T-cell (primary cell): ENCODE measurements at regions of chr20 and their contacts with region 1.

Region 1: GRCh38 chr20:36951198-36951976 is at the start of gene SAMHD1:
- DNase-seq: peak; percentile 60 to 87 (median 76)
- ATAC-seq: peak; percentile 75 to 82 (median 82)
- H3K4me3 ChIP-seq: peak within 1 kb of the TSS; percentile 98
- H3K4me3 Mint-ChIP-seq: peak within 1 kb of the TSS; percentile 90 to 97 (median 93)
- H3K27ac ChIP-seq: peak within 1 kb of the TSS; percentile 95
- H3K27ac Mint-ChIP-seq: peak within 1 kb of the TSS; percentile 98
- H3K4me1 ChIP-seq: peaks cover 30 to 64% of the 10 kb centered on the region in 2 experiments
- H3K4me1 Mint-ChIP-seq: peaks cover 41 to 51% (median 44%) of the 10 kb centered on the region in 3 donors
- H3K27me3 ChIP-seq: no peaks in the 10 kb centered on the region
- H3K27me3 Mint-ChIP-seq: no peaks in the 10 kb centered on the region
- total RNA-seq, gene SAMHD1: 218 to 437 (median 244) TPM

Region 2: DNA sequence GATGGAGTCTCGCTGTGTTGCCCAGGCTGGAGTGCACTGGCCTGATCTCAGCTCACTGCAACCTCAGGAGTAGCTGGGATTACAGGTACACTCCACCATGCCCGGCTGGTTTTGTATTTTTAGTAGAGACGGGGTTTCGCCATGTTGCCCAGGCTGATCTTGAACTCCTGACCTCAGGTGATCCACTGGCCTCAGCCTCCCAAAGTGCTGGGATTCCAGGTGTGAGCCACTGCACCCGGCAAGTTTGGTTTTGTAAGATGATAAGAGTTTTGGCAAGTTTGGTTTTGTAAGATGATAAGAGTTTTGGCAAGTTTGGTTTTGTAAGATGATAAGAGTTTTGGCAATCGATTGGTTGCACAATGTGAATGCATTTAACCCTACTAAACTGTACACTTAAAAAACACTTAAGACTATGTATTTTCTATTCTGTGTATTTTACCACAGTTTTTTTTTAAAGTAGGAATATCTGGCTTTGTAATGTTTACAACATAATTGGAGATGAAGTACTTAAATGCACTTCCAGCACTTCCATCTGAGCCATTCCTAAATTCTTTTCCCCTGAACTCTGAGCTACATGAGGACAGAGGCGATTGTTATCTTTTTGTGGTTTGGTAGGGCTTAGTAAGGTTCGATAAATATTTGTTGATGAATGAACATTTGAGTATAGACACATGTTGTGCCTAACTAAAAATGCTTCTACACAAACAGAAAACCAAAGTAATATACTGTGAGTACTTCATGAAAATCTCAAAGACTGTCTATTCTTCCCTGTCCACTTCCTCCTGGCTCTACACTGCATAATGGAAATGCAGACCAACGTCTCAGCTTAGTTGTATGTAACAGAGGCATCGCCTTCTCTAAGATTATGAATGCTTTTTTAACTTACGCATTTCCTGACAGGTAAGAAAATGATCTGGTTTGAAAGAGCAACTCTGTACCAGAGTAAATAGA is 18.6 kb before region 1 on chr20:
- CTCF ChIA-PET with region 1: interaction called in 1 of 2 experiments, 3 read pairs
- POLR2A ChIA-PET with region 1: interaction called in 1 of 2 experiments, 11 read pairs
- DNase-seq: no peak
- ATAC-seq: no peak
- H3K4me3 ChIP-seq: no peak overlapping the region
- H3K4me3 Mint-ChIP-seq: peak overlapping the region in 1 of 3 donors; percentile 10
- H3K27ac ChIP-seq: peak overlapping the region; percentile 31
- H3K27ac Mint-ChIP-seq: peak overlapping the region; percentile 83 to 89
- H3K4me1 ChIP-seq: peaks cover 13 to 62% of the 10 kb centered on the region in 2 experiments
- H3K4me1 Mint-ChIP-seq: peaks cover 56 to 79% (median 66%) of the 10 kb centered on the region in 3 donors
- H3K27me3 ChIP-seq: no peaks in the 10 kb centered on the region
- H3K27me3 Mint-ChIP-seq: no peaks in the 10 kb centered on the region